ENCODE measurements at regions of chr17 and their contacts with region 1.

Region 1: DNA sequence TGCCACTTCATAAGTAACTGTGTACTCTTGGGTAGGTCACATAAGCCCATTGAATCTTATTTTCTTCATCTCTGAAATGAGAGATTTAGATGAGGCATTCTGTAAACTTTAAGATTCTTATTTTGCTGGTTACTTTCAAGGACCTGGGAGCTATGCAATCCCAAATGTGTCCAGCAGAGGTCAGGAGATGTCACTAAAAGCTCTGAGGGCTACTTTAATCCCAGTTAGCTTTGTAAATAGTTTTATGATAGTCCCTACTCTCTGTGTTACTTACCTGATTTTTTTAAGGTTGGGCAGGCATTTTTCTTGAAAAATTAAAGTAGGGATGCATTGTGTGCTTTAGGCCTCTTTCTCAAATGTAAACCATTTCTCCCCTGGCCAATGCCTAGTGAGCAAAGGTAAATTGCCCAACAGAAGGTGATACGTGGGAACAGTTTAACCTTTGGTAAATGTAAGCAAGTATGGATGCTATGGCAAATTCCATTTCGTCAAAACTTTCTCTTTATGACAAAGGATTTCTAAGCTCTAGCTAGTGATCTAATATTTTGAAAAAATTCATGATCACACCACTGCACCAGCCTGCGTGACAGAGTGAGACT is 57.1 kb upstream of the WSB1 start:
- DNase-seq: peak; percentile 85
- ATAC-seq: peak; percentile 42
- H3K4me3 Mint-ChIP-seq: no peak overlapping the region
- H3K27ac Mint-ChIP-seq: no peak overlapping the region
- H3K4me1 Mint-ChIP-seq: peaks cover 33% of the 10 kb centered on the region
- H3K27me3 Mint-ChIP-seq: peaks cover 11% of the 10 kb centered on the region

Region 2: GRCh38 chr17:27199948-27200347 is 36.9 kb before region 1 on chr17:
- CTCF ChIA-PET with region 1: interaction called, 15 read pairs
- DNase-seq: peak; percentile 53
- ATAC-seq: peak; percentile 68
- H3K4me3 Mint-ChIP-seq: no peak overlapping the region
- H3K27ac Mint-ChIP-seq: peak overlapping the region; percentile 44
- H3K4me1 Mint-ChIP-seq: peaks cover 17% of the 10 kb centered on the region
- H3K27me3 Mint-ChIP-seq: peaks cover 3% of the 10 kb centered on the region

Region 3: GRCh38 chr17:27293898-27294688 is 57.3 kb after region 1 on chr17 and contains the start of gene WSB1:
- CTCF ChIA-PET with region 1: interaction called, 43 read pairs
- DNase-seq: peak; percentile 93
- ATAC-seq: peak; percentile 88
- H3K4me3 Mint-ChIP-seq: peak within 1 kb of the TSS; percentile 93
- H3K27ac Mint-ChIP-seq: peak within 1 kb of the TSS; percentile 99
- H3K4me1 Mint-ChIP-seq: peaks cover 35% of the 10 kb centered on the region
- H3K27me3 Mint-ChIP-seq: no peaks in the 10 kb centered on the region
- total RNA-seq, gene WSB1: 109 to 177 TPM

Region 4: DNA sequence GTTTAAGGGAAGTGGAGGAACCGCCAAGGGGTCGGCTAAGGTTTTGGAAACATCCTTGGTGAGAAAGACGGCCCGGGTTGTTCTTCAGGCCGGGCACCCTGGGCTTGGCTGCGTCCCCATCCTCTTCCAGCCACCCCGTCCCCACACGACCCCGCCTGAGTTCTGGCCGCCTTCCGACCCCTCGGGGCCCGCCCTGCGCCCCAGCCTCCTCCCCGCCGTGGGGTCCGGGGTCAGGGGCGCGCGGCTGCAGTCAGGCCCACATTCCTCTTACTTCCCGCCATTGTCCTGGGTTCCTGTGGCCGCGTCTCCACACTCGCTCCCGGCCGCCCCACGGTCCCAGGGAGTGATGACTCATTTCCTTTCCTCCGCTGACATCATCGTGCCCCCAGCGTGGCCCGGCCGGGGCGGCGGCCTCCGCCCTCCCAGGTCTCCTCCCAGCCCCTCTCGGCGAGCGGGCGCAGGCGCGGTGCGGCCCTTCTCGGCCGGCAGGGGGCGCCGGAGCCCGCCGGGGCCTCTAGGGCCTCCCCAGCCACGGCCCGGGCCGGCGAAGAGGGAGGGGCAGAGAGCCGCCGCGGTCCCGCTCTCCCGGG is 116.7 kb after region 1 on chr17:
- CTCF ChIA-PET with region 1: interaction called, 71 read pairs
- DNase-seq: peak; percentile 92
- ATAC-seq: peak; percentile 93
- H3K4me3 Mint-ChIP-seq: peak overlapping the region; percentile 80
- H3K27ac Mint-ChIP-seq: peak overlapping the region; percentile 91
- H3K4me1 Mint-ChIP-seq: peaks cover 27% of the 10 kb centered on the region
- H3K27me3 Mint-ChIP-seq: no peaks in the 10 kb centered on the region

Region 5: DNA sequence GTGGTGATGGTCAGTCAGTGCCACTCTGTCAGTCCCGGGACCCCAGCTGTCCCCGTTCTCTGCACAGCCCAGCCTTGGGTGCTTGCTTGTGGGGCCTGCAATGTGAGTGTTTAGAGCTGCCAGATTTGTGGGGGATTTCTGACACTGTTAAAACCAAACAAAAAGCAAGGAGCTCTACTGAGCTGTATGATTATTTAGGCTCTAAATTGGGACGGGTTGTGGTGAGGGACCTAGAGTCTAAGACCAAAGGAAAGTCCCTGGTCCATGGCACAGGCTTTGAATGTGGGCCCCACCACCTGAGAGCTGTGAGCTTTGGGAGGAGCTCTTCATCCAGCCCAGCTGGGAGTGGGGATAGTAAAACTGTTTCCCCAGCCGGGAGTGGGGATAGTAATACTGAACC is 282.7 kb after region 1 on chr17:
- CTCF ChIA-PET with region 1: no interaction called
- DNase-seq: no peak
- ATAC-seq: no peak
- H3K4me3 Mint-ChIP-seq: no peak overlapping the region
- H3K27ac Mint-ChIP-seq: no peak overlapping the region
- H3K4me1 Mint-ChIP-seq: peaks cover 52% of the 10 kb centered on the region
- H3K27me3 Mint-ChIP-seq: no peaks in the 10 kb centered on the region

Region 6: DNA sequence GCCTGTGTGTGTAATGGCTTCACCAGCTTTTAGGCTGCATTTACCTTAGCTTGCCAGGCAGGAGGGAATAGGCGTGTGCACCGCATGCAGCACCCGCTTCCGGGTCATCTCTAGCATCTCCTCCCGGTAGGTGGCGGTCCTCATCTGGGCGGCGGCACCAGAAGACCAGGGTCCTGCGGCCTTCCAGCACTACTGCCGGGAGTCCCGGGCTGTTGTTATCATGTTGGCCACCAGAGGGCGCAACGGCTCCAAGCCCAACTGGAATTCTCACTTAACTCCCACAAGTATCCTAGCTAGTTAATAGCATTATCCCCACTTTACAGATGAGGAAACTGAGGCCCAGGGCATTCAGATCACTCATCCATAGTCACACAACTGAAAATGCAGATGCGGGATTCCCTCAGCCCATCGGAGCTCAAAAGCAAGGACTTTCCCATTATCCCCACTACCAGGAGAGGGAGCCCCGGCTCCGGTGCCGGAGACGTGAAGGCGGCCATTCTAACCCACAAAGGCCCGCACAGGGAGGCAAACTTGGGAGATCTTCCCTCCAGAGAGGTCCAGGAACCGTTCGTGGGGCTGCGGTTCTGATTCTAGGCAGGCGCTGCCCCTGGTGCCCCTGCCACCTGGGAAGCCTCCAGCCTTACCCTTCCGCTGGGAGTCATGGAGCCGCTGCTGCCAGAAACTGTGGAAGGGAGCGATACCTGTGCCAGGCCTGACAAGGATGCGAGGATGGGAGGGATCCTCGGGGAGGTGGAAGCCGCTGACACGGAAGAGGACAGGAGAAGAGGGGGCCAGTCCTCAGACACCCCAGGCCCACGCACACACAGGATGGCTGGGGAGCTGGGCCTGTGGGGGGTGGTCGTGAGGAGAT is 418.1 kb after region 1 on chr17:
- CTCF ChIA-PET with region 1: interaction called, 10 read pairs
- DNase-seq: peak; percentile 82
- ATAC-seq: peak; percentile 82
- H3K4me3 Mint-ChIP-seq: no peak overlapping the region
- H3K27ac Mint-ChIP-seq: no peak overlapping the region
- H3K4me1 Mint-ChIP-seq: peaks cover 6% of the 10 kb centered on the region
- H3K27me3 Mint-ChIP-seq: no peaks in the 10 kb centered on the region